Activated naive CD4-positive, alpha-beta T cell treated with anti-CD3 and anti-CD28 coated beads for 36 hours (primary cell): ENCODE measurements at regions of chr5 and their contacts with region 1.

Region 1: GRCh38 chr5:138223532-138223931 is 10.4 kb upstream of the CDC23 start:
- DNase-seq: no peak
- H3K4me3 Mint-ChIP-seq: no peak overlapping the region
- H3K27ac Mint-ChIP-seq: no peak overlapping the region
- H3K4me1 Mint-ChIP-seq: peaks cover 3% of the 10 kb centered on the region
- H3K27me3 Mint-ChIP-seq: peaks cover 7% of the 10 kb centered on the region

Region 2: GRCh38 chr5:138282920-138283742 is 59.6 kb after region 1 on chr5:
- CTCF ChIA-PET with region 1: interaction called, 5 read pairs
- intact Hi-C with region 1: loop called (anchors 1 kb)
- DNase-seq: peak; percentile 15
- H3K4me3 Mint-ChIP-seq: no peak overlapping the region
- H3K27ac Mint-ChIP-seq: no peak overlapping the region
- H3K4me1 Mint-ChIP-seq: no peaks in the 10 kb centered on the region
- H3K27me3 Mint-ChIP-seq: no peaks in the 10 kb centered on the region